GM10248 (cell line): ENCODE measurements at regions of chr14 and their contacts with region 1.

Region 1: DNA sequence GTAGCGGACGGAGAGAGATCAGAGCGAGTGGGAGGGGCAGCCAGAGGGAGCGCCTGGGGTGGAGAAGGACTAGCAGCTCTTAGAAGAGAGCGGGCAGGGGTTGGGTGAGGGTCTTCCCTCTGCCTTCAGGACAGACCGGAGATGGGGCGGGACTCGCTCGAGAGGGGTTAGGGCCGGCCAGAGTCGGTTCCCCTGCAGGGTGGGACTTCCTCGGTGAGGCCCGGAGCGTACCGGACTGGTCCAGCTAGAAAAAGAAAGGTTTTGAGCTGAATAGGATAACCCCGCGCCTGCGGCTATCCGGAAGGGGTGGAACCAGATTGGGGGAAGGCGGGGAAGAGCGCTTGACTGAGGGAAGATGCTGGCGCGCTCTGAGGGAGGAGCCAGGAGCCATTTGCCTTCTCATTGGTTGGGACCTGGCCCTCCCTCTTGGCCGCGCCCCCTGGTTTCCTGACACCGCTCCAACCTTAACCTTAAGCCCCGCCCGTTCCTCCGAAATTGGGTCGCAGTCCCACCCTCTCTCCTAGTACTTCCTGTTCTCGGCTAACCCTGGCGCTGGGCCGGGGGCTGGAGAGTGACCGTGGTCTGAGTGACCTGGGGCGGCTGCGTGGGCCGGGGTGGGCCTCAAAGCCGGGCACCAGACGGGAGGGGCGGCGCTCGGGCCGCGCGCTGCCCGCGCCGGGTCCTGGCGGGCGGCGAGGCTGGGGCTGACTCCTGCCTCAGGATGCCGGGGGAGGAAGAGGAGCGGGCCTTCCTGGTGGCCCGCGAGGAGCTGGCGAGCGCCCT is at the start of gene RNF31:
- DNase-seq: peak; percentile 97
- CTCF ChIP-seq: no peak

Region 2: DNA sequence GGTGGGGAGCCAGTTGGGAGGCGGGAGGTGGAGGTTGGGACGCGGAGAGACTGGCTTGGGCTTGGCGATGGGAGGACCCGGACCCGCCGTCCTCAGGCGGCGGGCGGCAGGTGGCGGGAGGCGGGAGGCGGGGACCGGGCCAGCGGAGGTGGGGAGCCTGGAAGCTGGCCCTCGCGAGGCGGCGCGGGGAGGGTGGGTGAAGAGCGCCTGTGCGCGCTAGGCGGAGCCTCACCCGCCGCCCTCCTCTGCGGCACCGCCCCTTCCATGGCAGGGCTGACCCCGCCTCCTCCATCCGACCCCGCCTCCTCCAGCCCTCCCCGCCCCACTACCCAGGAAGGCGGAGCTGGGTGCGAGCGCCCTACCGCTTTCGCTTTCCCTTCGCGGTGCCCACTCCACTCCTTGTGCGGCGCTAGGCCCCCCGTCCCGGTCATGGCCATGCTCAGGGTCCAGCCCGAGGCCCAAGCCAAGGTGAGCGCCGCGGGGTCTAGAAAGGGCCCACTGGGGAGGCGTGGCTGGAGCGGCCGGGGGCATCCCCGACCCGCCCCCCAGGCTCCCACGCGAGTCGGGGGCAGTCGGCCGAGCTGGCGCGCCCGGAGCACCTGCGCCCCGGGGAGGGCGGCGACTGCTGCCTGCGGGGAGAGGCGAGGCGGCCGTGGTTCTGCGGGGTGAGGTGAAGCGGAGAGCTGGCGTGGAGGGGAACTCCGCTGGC is 11.2 kb before region 1 on chr14 and contains the start of gene PSME1:
- CTCF ChIA-PET with region 1: interaction called, 24 read pairs
- POLR2A ChIA-PET with region 1: interaction called, 14 read pairs
- DNase-seq: peak; percentile 97
- CTCF ChIP-seq: no peak

Region 3: GRCh38 chr14:24188251-24189058 is 41.3 kb after region 1 on chr14 and contains the start of gene IPO4:
- CTCF ChIA-PET with region 1: no interaction called
- POLR2A ChIA-PET with region 1: no interaction called
- DNase-seq: peak; percentile 98
- CTCF ChIP-seq: no peak